Activated T-helper 1 cell treated with anti-CD3 and anti-CD28 coated beads, Interleukin-12 subunit alpha, Interleukin-12 subunit beta, Interleukin-2, Interleukin-4 antibody, amounts not matched to agents 30 ng/mL and 10 ng/mL and 1 ng/mL, durations not matched to agents 14 hours and 24 hours and 36 hours (primary cell): ENCODE measurements at regions of chr10 and their contacts with region 1.

Region 1: DNA sequence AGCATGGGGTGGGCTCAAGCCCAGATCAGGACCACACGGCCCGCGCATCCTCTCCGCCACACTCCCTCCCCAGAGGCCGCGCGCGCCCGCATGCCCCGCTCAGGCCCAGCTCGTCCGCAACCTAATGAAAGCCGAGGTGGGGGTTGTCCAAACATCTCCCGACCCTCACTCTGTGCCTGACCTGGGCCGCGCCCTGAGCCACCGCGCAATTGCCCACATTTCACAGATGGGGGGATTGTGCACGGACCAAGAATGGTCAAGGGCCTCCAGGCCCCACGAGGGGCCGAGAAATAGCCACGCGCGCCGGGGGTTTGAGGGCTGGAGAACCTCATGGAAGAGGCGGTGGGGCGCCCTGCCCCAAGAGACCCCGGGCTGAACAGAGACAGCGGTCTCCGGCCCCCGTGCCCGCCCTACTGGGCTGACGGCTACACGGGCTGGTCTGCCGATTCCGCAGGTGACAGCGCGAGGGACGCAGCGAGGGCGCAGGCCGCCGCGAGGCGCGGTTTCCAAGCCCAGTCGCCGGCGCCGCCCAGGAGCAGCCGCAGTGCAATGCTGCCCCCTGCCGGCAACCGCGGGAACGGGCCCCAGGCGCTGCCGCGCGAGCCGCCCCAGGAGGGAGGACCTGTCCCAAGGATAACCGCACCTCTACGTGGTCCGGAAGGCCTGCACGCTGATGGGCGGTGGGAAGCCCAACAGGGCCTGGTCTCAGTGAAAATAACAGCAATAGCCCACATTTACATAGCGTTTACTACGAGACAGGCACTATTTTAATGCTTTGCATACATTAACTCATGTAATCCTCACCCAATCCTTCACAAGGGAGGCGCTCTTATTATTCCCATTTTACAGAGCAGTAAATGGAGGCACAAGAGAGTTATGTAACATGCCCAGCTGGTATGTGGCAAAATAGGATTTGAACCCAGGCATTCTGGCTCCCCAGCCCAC is 10.5 kb upstream of the GRID1 start:
- DNase-seq: peak; percentile 74
- H3K4me3 Mint-ChIP-seq: no peak overlapping the region
- H3K27ac Mint-ChIP-seq: no peak overlapping the region
- H3K4me1 Mint-ChIP-seq: no peaks in the 10 kb centered on the region
- H3K27me3 Mint-ChIP-seq: peaks cover 31% of the 10 kb centered on the region

Region 2: DNA sequence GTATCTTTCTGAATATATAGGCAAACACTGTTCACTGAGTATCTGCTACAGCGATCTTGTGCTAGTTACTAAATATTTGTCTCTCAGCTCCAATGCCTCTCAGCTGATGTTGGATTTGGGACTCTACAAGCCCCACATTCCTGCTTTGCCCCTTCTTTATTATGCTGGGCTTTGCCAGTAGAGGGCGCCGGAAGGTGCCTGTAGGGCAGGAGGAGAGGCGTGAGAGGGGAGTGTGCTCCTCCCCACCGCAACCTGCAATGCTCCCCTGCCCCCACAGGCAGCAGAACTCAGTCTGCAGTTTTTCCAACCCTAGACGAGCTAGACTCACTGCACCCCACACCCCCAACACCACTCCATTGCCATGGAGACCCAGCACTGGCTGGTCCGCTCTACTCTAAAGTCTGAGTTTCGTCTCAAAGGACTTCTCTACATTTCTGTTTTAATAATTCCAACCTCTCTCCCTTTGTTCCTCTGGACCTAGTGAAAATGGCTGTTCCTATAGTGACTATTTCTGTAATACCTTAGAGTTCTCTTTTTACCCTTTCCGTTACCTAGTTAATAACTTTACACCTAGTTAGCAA is 1711.2 kb before region 1 on chr10:
- intact Hi-C with region 1: loop called (anchors 5 kb)
- DNase-seq: no peak
- H3K4me3 Mint-ChIP-seq: no peak overlapping the region
- H3K27ac Mint-ChIP-seq: no peak overlapping the region
- H3K4me1 Mint-ChIP-seq: no peaks in the 10 kb centered on the region
- H3K27me3 Mint-ChIP-seq: peaks cover 3% of the 10 kb centered on the region

Region 3: GRCh38 chr10:84783386-84783785 is 1593.7 kb before region 1 on chr10:
- intact Hi-C with region 1: loop called (anchors 5 kb)
- DNase-seq: no peak
- H3K4me3 Mint-ChIP-seq: no peak overlapping the region
- H3K27ac Mint-ChIP-seq: no peak overlapping the region
- H3K4me1 Mint-ChIP-seq: no peaks in the 10 kb centered on the region
- H3K27me3 Mint-ChIP-seq: no peaks in the 10 kb centered on the region

Region 4: DNA sequence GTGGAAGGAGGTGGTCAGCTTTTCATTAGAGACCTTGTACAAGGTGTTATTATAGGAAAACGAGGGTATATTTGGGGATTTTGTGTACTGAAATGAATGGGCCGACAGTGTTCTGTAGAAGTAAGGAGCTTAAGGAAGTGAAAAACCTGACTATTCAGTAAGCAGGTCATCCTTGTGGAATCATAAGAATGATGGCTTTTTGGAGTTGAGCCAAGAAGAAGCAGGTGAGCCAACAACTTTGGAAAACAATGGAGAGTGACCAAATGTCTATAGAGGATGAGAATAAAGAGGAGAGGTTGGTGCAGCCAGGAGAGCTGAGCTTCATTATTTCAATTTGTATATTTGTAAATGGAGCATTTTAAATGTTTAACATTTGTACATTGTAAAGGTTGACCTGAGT is 1453.0 kb before region 1 on chr10:
- intact Hi-C with region 1: loop called (anchors 1 kb)
- DNase-seq: no peak
- H3K4me3 Mint-ChIP-seq: no peak overlapping the region
- H3K27ac Mint-ChIP-seq: no peak overlapping the region
- H3K4me1 Mint-ChIP-seq: no peaks in the 10 kb centered on the region
- H3K27me3 Mint-ChIP-seq: peaks cover 2% of the 10 kb centered on the region

Region 5: DNA sequence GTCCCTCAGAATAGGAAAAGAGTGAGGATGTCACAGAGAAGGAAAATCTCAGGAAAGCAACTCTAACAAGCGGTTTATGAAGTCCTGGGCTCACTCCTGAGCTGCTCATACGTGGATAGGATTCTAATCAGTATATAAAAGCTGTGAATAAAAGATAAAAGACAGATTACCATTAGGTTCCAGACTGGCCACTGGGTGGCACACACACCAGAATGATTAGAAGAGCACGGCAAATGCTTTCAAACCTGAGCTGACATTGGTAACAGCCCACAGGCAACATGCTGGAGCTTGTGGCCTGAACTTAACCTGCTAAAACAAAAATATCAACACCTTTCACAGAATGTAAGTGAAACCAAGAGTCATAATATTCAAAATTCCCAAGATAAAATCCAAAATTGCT is 381.3 kb before region 1 on chr10:
- intact Hi-C with region 1: loop called (anchors 2 kb)
- DNase-seq: no peak
- H3K4me3 Mint-ChIP-seq: no peak overlapping the region
- H3K27ac Mint-ChIP-seq: no peak overlapping the region
- H3K4me1 Mint-ChIP-seq: no peaks in the 10 kb centered on the region
- H3K27me3 Mint-ChIP-seq: peaks cover 18% of the 10 kb centered on the region

Region 6: GRCh38 chr10:86100581-86101061 is 276.5 kb before region 1 on chr10:
- intact Hi-C with region 1: loop called (anchors 1 kb)
- DNase-seq: no peak
- H3K4me3 Mint-ChIP-seq: no peak overlapping the region
- H3K27ac Mint-ChIP-seq: no peak overlapping the region
- H3K4me1 Mint-ChIP-seq: no peaks in the 10 kb centered on the region
- H3K27me3 Mint-ChIP-seq: peaks cover 4% of the 10 kb centered on the region

Region 7: DNA sequence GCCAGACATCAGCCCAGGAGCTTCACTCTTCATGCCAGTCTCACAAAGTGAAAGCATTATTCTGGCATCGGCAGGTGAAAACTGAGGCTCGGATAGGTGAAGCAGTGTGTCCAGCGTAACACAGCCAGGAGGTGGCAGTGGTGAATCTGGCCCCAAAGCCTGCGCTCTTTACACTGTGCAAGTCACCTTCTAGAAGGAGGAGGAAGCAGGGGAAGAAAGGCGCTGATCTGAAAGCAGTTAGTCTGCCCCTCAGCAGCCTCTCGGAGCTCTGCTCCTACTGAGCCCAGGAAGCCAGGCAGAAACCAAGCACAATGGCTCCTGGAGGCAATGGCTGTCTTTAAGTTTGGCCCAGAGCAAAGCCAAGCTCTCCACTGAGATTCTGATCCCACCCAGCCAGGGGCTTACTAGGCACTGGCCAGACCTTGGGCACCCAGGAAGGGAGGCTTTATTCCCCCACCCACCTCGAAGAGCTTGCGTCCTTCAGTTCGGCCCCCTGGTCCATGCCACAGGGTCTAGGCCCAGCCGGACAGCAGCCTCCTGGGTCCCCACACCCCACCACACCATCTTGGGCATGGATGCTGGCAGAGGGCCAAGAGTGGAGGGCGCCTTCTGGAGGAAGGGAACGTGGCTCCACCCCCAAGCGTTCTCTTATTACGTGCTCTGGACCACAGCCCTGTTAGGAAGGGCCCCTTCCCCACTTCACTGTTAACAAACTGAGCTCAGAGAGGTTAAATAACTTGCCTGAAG is 115.0 kb before region 1 on chr10:
- intact Hi-C with region 1: loop called (anchors 1 kb)
- DNase-seq: no peak
- H3K4me3 Mint-ChIP-seq: no peak overlapping the region
- H3K27ac Mint-ChIP-seq: no peak overlapping the region
- H3K4me1 Mint-ChIP-seq: no peaks in the 10 kb centered on the region
- H3K27me3 Mint-ChIP-seq: peaks cover 11% of the 10 kb centered on the region

Region 8: GRCh38 chr10:86334488-86335085 is 42.5 kb before region 1 on chr10:
- intact Hi-C with region 1: no loop called
- DNase-seq: no peak
- H3K4me3 Mint-ChIP-seq: no peak overlapping the region
- H3K27ac Mint-ChIP-seq: no peak overlapping the region
- H3K4me1 Mint-ChIP-seq: no peaks in the 10 kb centered on the region
- H3K27me3 Mint-ChIP-seq: no peaks in the 10 kb centered on the region

Region 9: GRCh38 chr10:86535057-86535882 is 158.1 kb after region 1 on chr10:
- intact Hi-C with region 1: no loop called
- DNase-seq: no peak
- H3K4me3 Mint-ChIP-seq: peak overlapping the region; percentile 62
- H3K27ac Mint-ChIP-seq: no peak overlapping the region
- H3K4me1 Mint-ChIP-seq: no peaks in the 10 kb centered on the region
- H3K27me3 Mint-ChIP-seq: peaks cover 4% of the 10 kb centered on the region